ENCODE measurements at regions of chr11 and their contacts with region 1.

Region 1: GRCh38 chr11:19566583-19567379 is 145.9 kb upstream of the NAV2 start:
- DNase-seq: no peak
- H3K4me3 ChIP-seq: no peak overlapping the region
- H3K4me3 Mint-ChIP-seq: no peak overlapping the region
- H3K27ac ChIP-seq: no peak overlapping the region
- H3K27ac Mint-ChIP-seq: no peak overlapping the region
- H3K4me1 ChIP-seq: no peaks in the 10 kb centered on the region
- H3K4me1 Mint-ChIP-seq: no peaks in the 10 kb centered on the region
- H3K27me3 ChIP-seq: no peaks in the 10 kb centered on the region
- H3K27me3 Mint-ChIP-seq: peaks cover 7 to 27% of the 10 kb centered on the region in 2 donors

Region 2: GRCh38 chr11:19742588-19743292 is 176.0 kb after region 1 on chr11:
- CTCF ChIA-PET with region 1: interaction called, 75 read pairs
- POLR2A ChIA-PET with region 1: no interaction called
- DNase-seq: peak; percentile 31 to 79 (median 55)
- H3K4me3 ChIP-seq: no peak overlapping the region
- H3K4me3 Mint-ChIP-seq: no peak overlapping the region
- H3K27ac ChIP-seq: no peak overlapping the region
- H3K27ac Mint-ChIP-seq: no peak overlapping the region
- H3K4me1 ChIP-seq: no peaks in the 10 kb centered on the region
- H3K4me1 Mint-ChIP-seq: no peaks in the 10 kb centered on the region
- H3K27me3 ChIP-seq: no peaks in the 10 kb centered on the region
- H3K27me3 Mint-ChIP-seq: peaks cover 0 to 2% of the 10 kb centered on the region in 2 donors

Region 3: GRCh38 chr11:19829109-19829824 is 262.5 kb after region 1 on chr11:
- CTCF ChIA-PET with region 1: no interaction called
- POLR2A ChIA-PET with region 1: no interaction called
- DNase-seq: no peak
- H3K4me3 ChIP-seq: no peak overlapping the region
- H3K4me3 Mint-ChIP-seq: no peak overlapping the region
- H3K27ac ChIP-seq: no peak overlapping the region
- H3K27ac Mint-ChIP-seq: no peak overlapping the region
- H3K4me1 ChIP-seq: no peaks in the 10 kb centered on the region
- H3K4me1 Mint-ChIP-seq: no peaks in the 10 kb centered on the region
- H3K27me3 ChIP-seq: no peaks in the 10 kb centered on the region
- H3K27me3 Mint-ChIP-seq: peaks cover 0 to 10% of the 10 kb centered on the region in 2 donors